Ascending aorta (tissue), 2 donors: ENCODE measurements at regions of chr12 and their contacts with region 1.

Region 1: GRCh38 chr12:54765650-54766049 is 88.7 kb upstream of the MUCL1 start:
- DNase-seq: no peak
- H3K4me3 ChIP-seq: no peak overlapping the region
- H3K27ac ChIP-seq: no peak overlapping the region
- H3K4me1 ChIP-seq: no peaks in the 10 kb centered on the region
- H3K27me3 ChIP-seq: no peaks in the 10 kb centered on the region
- CTCF ChIP-seq: no peak

Region 2: GRCh38 chr12:54977155-54977554 is 211.5 kb after region 1 on chr12:
- intact Hi-C with region 1: loop called (anchors 5 kb)
- DNase-seq: no peak
- H3K4me3 ChIP-seq: no peak overlapping the region
- H3K27ac ChIP-seq: no peak overlapping the region
- H3K4me1 ChIP-seq: no peaks in the 10 kb centered on the region
- H3K27me3 ChIP-seq: no peaks in the 10 kb centered on the region
- CTCF ChIP-seq: no peak